Activated B cell treated with CpG ODN at 0.5 μM for 24 hours (primary cell): ENCODE measurements at regions of chr5 and their contacts with region 1.

Region 1: GRCh38 chr5:4116834-4117233 is 521.2 kb downstream of the IRX1 start:
- DNase-seq: no peak
- ATAC-seq: no peak
- H3K4me3 Mint-ChIP-seq: no peak overlapping the region
- H3K27ac Mint-ChIP-seq: no peak overlapping the region
- H3K4me1 Mint-ChIP-seq: no peaks in the 10 kb centered on the region
- H3K27me3 Mint-ChIP-seq: no peaks in the 10 kb centered on the region
- CTCF ChIP-seq: no peak

Region 2: DNA sequence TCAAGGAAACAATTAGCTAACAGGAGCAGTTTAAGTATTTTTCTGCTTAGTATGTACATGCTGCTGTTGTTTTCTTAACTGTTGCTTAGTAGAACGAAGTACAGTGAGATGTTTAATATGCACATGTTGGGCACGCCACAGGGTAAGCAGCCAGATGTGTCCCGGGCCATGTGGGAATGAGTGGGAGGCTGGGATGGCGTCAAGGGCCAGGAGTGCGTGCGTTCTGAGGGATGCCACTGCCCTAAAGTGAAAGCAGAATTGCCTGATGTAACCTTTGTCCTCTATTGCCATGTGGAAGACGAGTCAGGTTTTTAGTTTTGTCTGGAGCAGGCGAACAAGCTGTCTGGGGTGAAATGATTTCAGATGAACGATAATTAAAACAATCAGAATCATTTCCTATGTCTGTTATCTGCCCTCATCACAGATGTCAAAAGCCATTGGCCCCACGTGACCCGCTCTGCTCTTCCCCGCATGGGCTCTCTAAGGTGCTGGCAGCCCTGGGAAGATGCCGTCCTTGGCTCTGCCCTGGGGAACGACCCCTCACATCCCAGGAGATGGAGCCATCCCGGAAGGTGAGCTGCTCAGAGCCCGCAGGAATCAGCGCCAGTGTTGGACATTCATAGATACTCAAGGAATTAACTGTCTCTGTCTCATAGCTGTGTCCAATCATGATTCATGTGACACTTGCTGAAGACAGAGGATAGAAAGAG is 1877.5 kb before region 1 on chr5:
- CTCF ChIA-PET with region 1: no interaction called
- POLR2A ChIA-PET with region 1: no interaction called
- intact Hi-C with region 1: no loop called
- DNase-seq: no peak
- ATAC-seq: no peak
- H3K4me3 Mint-ChIP-seq: no peak overlapping the region
- H3K27ac Mint-ChIP-seq: no peak overlapping the region
- H3K4me1 Mint-ChIP-seq: no peaks in the 10 kb centered on the region
- H3K27me3 Mint-ChIP-seq: no peaks in the 10 kb centered on the region
- CTCF ChIP-seq: no peak

Region 3: GRCh38 chr5:4156889-4157288 is 40.1 kb after region 1 on chr5:
- CTCF ChIA-PET with region 1: no interaction called
- POLR2A ChIA-PET with region 1: no interaction called
- intact Hi-C with region 1: loop called (anchors 1 kb)
- DNase-seq: no peak
- ATAC-seq: no peak
- H3K4me3 Mint-ChIP-seq: no peak overlapping the region
- H3K27ac Mint-ChIP-seq: no peak overlapping the region
- H3K4me1 Mint-ChIP-seq: no peaks in the 10 kb centered on the region
- H3K27me3 Mint-ChIP-seq: no peaks in the 10 kb centered on the region
- CTCF ChIP-seq: no peak

Region 4: GRCh38 chr5:4258170-4258569 is 141.3 kb after region 1 on chr5:
- CTCF ChIA-PET with region 1: no interaction called
- POLR2A ChIA-PET with region 1: interaction called, 10 read pairs
- intact Hi-C with region 1: no loop called
- DNase-seq: no peak
- ATAC-seq: no peak
- H3K4me3 Mint-ChIP-seq: no peak overlapping the region
- H3K27ac Mint-ChIP-seq: no peak overlapping the region
- H3K4me1 Mint-ChIP-seq: no peaks in the 10 kb centered on the region
- H3K27me3 Mint-ChIP-seq: no peaks in the 10 kb centered on the region
- CTCF ChIP-seq: no peak